RWPE1 (cell line): ENCODE measurements at regions of chr5 and their contacts with region 1.

Region 1: GRCh38 chr5:134041570-134042411 is 37.0 kb upstream of the VDAC1 start:
- DNase-seq: no peak
- H3K27ac ChIP-seq: no peak overlapping the region
- CTCF ChIP-seq: no peak

Region 2: GRCh38 chr5:134026521-134027268 is 15.1 kb before region 1 on chr5:
- CTCF ChIA-PET with region 1: interaction called, 19 read pairs
- POLR2A ChIA-PET with region 1: no interaction called
- DNase-seq: peak; percentile 87
- H3K27ac ChIP-seq: no peak overlapping the region
- CTCF ChIP-seq: peak; percentile 69

Region 3: GRCh38 chr5:134073404-134073803 is 31.6 kb after region 1 on chr5:
- CTCF ChIA-PET with region 1: interaction called, 15 read pairs
- POLR2A ChIA-PET with region 1: no interaction called
- DNase-seq: no peak
- H3K27ac ChIP-seq: no peak overlapping the region
- CTCF ChIP-seq: no peak

Region 4: GRCh38 chr5:134101686-134102439 is 60.1 kb after region 1 on chr5:
- CTCF ChIA-PET with region 1: interaction called, 13 read pairs
- POLR2A ChIA-PET with region 1: interaction called, 3 read pairs
- DNase-seq: peak; percentile 83
- H3K27ac ChIP-seq: no peak overlapping the region
- CTCF ChIP-seq: peak; percentile 96

Region 5: DNA sequence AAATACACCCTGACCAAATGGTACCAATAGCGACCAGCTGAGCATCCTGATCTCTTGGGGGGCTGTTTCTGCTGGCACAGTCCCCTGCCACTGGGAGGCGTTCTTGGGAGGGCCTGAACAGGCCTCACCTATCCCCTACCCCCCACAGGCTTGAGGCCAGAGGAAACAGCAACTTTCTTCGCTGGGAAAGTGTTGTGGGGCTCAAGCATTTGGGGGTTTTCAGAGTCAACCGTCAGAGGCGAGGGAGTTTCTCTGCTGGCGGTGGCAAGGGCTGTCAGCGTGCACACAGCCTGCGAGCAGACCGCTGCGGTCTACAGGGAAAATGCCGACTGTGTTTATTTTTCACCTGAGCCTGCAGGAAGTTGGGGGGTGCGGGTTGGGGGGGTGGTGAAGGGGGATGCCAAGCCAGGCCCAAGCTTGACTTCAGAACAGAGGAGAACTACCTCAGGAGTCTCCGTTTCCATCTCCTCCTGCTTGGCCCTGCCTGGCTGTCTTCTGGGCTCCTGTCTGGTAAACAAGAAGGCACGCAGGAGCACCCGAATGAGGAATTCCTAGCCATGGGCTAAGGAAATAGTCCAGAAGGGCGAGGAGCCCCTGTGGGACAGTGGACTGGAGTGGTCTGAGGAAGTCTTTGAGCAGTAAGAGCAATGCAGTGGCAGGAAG is 90.7 kb after region 1 on chr5:
- CTCF ChIA-PET with region 1: interaction called, 219 read pairs
- POLR2A ChIA-PET with region 1: no interaction called
- DNase-seq: no peak
- H3K27ac ChIP-seq: no peak overlapping the region
- CTCF ChIP-seq: no peak